Gastrocnemius medialis (tissue), 4 donors: ENCODE measurements at regions of chr6 and their contacts with region 1.

Region 1: DNA sequence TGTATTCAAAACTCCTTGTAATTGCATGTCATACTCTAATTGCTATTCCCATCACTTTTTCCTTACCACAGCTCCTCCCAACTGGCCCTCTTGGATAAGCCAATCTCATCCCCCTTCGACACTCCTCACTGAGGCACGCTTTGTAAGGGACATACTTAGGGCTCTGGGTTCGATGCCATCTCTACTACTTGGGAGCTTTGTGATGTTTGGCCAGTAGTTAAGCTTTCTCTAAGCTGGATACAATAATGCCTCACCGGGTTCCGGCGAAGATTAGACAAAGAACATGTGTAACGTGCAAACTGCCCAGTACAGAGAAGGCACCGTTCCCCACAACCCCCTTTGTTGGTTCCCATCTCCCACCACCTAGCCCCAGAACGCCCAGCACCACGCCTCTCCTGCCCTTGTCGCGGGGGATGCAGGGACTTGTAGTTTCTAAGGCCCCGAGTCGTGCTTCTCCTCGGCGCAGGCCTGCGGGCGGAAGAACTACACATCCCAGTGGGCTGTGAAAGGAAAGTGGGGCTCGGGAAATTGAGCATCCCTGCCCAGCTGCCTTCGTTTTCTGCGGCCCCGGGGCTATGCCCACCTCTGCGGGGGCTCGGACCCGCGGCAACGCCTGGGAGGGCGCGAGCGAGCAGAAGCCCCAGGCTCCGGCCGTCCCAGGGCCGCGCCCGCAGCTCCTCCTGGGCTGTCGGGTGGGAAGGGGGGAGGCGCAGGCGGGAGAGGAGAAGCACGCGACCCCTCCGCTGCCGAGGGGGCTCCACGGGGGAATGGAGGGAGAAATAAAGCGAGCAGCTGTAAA is 1.1 kb upstream of the ZDHHC14 start:
- DNase-seq: peak; percentile 86
- ATAC-seq: peak; percentile 78
- H3K4me3 ChIP-seq: peak overlapping the region; percentile 90 to 99 (median 94)
- H3K27ac ChIP-seq: peak overlapping the region; percentile 97 to 98 (median 98)
- H3K4me1 ChIP-seq: peaks cover 14 to 16% of the 10 kb centered on the region in 2 donors
- H3K27me3 ChIP-seq: no peaks in the 10 kb centered on the region
- CTCF ChIP-seq: no peak
- POLR2A ChIP-seq: peak; percentile 5 to 16

Region 2: GRCh38 chr6:157323255-157323965 is 56.4 kb before region 1 on chr6 and contains the start of gene TMEM242:
- in situ Hi-C with region 1: loop called in 1 of 4 experiments (anchors 10 kb)
- intact Hi-C with region 1: loop called (anchors 2 kb)
- DNase-seq: peak; percentile 85 to 90
- ATAC-seq: peak; percentile 95
- H3K4me3 ChIP-seq: peak within 1 kb of the TSS; percentile 73 to 91 (median 80)
- H3K27ac ChIP-seq: peak within 1 kb of the TSS; percentile 89 to 94 (median 92)
- H3K4me1 ChIP-seq: peaks cover 16 to 31% of the 10 kb centered on the region in 2 donors
- H3K27me3 ChIP-seq: no peaks in the 10 kb centered on the region
- CTCF ChIP-seq: peak in 4 of 5 experiments; percentile 41 to 48 (median 42)
- POLR2A ChIP-seq: peak; percentile 78
- total RNA-seq, gene TMEM242: 3.9 to 7.7 (median 6.3) TPM

Region 3: GRCh38 chr6:157434349-157435033 is 54.6 kb after region 1 on chr6:
- in situ Hi-C with region 1: no loop called
- intact Hi-C with region 1: loop called (anchors 5 kb)
- DNase-seq: peak; percentile 43 to 75
- ATAC-seq: peak; percentile 47 to 75
- H3K4me3 ChIP-seq: no peak overlapping the region
- H3K27ac ChIP-seq: peak overlapping the region; percentile 49 to 79 (median 70)
- H3K4me1 ChIP-seq: peaks cover 28 to 48% of the 10 kb centered on the region in 2 donors
- H3K27me3 ChIP-seq: no peaks in the 10 kb centered on the region
- CTCF ChIP-seq: no peak
- POLR2A ChIP-seq: no peak

Region 4: DNA sequence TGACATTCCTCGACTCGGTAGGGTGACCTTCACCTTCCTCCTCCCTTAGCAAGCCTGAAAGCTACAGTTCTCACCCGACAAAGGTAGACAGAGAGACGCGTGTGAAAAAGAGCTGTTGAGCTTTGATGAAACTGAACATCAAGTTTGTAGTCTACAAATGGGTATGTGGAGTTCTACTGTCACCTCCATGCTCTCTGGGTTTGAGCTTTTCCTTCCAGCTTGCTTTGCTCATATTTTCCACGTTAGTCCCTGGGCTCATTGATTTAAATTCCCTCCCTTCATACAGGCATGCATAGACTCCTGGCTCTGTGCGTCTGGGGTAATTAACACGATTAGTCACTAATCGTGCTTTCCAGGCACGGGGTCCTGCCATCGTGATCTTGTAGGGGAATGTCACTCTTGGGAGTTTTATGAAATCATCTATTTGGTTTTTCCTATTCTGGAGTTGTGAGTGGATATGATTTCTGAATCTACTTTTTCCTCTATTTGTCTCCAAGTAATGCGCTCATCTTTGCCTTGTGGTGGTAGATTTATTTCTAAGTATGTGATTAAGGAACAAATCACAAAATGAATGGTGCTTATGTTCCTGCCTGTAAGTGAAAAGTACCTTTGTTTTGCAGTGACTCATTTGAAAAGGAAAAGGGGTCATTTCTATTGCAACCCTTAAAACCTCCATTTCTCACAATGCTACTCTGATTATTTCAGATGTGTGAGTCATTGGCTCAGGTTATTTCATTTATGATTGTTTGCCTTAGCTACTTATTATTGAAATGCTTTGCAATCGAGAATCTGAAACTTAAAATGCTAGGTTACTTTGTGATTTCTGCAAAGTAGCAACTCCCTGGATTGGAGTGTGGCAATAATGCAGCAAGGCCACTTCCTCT is 155.7 kb after region 1 on chr6:
- in situ Hi-C with region 1: no loop called
- intact Hi-C with region 1: loop called (anchors 5 kb)
- DNase-seq: no peak
- ATAC-seq: no peak
- H3K4me3 ChIP-seq: no peak overlapping the region
- H3K27ac ChIP-seq: peak overlapping the region; percentile 4 to 59 (median 32)
- H3K4me1 ChIP-seq: peaks cover 50 to 66% of the 10 kb centered on the region in 2 donors
- H3K27me3 ChIP-seq: no peaks in the 10 kb centered on the region
- CTCF ChIP-seq: no peak
- POLR2A ChIP-seq: no peak

Region 5: DNA sequence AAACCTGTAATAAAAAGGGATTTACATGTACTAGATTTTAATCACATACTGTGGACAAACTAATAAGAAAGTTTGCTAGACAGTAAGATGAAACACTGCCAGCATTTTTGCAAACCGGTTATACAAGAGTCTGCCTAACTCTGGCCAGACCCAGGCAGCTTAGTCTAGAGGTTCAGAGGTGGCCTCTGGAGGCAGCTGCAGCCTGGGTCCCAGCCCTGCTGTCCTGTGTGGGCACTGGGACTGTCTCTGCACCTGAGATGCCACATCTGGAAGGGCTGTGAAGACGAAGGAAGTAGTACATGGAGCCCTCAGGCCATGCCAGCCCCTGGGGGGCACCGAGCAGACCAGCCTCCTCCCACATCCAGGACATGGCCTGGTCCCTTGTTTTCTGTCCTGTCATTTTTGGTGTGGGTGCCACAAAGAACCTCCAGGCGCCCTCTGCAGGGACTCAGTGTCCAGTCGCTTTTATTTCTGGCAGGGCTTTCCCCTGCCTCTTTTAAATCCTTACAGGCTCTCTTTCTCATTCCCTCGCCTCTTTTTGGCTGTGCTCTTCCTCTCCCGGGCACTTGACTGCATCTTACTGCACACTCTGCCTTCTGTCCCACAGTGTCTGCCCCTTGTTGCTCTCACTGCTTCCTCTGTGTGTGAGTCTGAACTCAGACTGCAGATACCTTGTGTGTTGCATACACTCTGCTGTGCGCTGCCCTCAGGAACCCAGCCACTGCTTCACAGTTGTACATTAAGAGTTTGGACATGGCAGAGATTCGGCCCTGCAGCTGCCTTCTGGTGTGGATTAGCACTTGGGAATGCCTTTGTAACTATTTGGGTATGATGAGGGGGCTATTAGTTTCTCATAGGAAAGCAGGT is 217.8 kb after region 1 on chr6:
- in situ Hi-C with region 1: loop called in 2 of 4 experiments (anchors 25 kb)
- intact Hi-C with region 1: no loop called
- DNase-seq: peak in 1 of 2 donors; percentile 40
- ATAC-seq: peak; percentile 53 to 72
- H3K4me3 ChIP-seq: no peak overlapping the region
- H3K27ac ChIP-seq: no peak overlapping the region
- H3K4me1 ChIP-seq: no peaks in the 10 kb centered on the region
- H3K27me3 ChIP-seq: no peaks in the 10 kb centered on the region
- CTCF ChIP-seq: peak in 4 of 5 experiments; percentile 5 to 53 (median 33)
- POLR2A ChIP-seq: no peak